HCT116 (cell line): ENCODE measurements at regions of chr11 and their contacts with region 1.

Region 1: DNA sequence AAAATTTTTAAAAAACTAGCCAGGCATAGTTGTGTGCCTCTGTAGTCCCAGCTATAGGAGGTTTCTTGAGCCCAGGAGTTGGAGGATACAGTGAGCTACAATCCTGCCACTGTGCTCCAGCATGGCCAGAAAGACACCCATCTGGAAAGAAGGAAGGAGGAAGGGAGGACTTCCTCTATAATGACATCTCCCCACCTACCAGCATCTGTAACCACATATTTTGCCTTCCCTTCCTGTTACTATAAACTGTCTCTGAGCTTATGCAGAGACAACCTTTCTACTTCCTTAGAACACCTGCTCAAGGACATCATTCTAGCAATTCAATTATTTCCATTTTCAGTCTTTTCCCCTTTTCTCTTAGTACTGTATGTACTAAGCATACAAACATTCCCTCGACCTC is 2.2 kb upstream of the NUP160 start:
- DNase-seq: no peak
- ATAC-seq: no peak
- H3K4me3 ChIP-seq: no peak overlapping the region
- H3K27ac ChIP-seq: no peak overlapping the region
- H3K4me1 ChIP-seq: peaks cover 8 to 24% of the 10 kb centered on the region in 2 experiments; a peak in 3 of 4 replicates
- H3K27me3 ChIP-seq: no peaks in the 10 kb centered on the region
- CTCF ChIP-seq: no peak
- POLR2A ChIP-seq: no peak
- RAD21 ChIP-seq: no peak

Region 2: DNA sequence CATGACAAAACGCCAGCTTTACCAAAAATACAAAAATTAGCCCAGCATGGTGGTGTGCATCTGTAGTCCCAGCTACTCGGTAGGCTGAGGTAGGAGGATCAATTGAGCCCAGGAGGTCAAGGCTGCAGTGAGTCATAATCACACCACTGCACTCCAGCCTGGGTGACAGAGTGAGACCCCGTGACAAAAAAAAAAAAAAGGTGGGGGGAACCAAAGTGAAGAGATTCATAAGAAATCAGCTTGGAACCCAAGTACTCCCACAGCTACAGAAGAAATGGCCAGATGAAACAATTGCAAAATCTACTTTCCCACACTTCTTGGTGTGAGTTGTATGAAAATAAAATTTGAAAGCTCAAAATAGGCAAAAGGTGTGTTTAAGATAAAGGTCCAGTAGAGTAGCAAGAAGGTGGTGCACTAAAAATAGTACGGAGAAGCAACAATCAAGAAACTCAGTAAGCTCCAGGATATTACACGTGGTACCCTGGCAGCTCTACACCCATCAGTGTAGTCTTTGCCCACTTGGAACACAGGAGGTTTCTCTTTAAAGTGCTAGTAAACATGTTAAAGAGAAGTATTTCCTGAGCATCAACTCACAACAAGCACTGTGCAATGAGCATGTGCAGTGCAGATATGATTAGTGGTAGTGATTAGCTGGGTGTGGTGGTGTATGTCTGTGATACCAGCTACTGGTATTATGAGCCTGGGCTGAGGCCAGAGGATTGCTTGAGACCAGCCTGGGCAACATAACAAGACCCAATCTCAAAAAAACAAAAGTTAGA is 1238.6 kb before region 1 on chr11:
- CTCF ChIA-PET with region 1: no interaction called
- POLR2A ChIA-PET with region 1: no interaction called
- RAD21 ChIA-PET with region 1: no interaction called
- intact Hi-C with region 1: no loop called
- DNase-seq: no peak
- ATAC-seq: no peak
- H3K4me3 ChIP-seq: no peak overlapping the region
- H3K27ac ChIP-seq: no peak overlapping the region
- H3K4me1 ChIP-seq: peaks cover 7 to 13% of the 10 kb centered on the region in 2 experiments
- H3K27me3 ChIP-seq: no peaks in the 10 kb centered on the region
- CTCF ChIP-seq: no peak
- POLR2A ChIP-seq: no peak
- RAD21 ChIP-seq: no peak

Region 3: DNA sequence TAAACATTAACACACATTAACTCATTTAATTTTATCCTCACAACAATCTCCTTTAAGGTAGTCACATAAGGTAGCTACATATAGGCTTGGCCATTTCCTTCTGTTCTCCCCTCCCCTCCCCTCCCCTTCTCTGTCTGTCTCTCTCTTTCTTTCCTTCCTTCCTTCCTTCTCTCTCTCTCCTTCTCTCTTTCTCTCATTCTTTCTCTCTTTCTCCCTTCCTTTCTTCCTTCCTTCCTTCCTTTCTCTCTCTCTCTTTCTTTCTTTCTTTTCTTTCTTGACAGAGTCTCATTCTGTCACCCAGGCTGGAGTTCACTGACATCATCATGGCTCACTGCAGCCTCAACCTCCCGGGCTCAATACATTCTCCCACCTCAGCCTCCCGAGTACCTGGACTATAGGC is 20.1 kb after region 1 on chr11:
- CTCF ChIA-PET with region 1: no interaction called
- POLR2A ChIA-PET with region 1: no interaction called
- RAD21 ChIA-PET with region 1: no interaction called
- intact Hi-C with region 1: no loop called
- DNase-seq: no peak
- ATAC-seq: no peak
- H3K4me3 ChIP-seq: no peak overlapping the region
- H3K27ac ChIP-seq: no peak overlapping the region
- H3K4me1 ChIP-seq: peaks cover 10 to 21% of the 10 kb centered on the region in 2 experiments; a peak in 3 of 4 replicates
- H3K27me3 ChIP-seq: no peaks in the 10 kb centered on the region
- CTCF ChIP-seq: no peak
- POLR2A ChIP-seq: no peak
- RAD21 ChIP-seq: no peak

Region 4: DNA sequence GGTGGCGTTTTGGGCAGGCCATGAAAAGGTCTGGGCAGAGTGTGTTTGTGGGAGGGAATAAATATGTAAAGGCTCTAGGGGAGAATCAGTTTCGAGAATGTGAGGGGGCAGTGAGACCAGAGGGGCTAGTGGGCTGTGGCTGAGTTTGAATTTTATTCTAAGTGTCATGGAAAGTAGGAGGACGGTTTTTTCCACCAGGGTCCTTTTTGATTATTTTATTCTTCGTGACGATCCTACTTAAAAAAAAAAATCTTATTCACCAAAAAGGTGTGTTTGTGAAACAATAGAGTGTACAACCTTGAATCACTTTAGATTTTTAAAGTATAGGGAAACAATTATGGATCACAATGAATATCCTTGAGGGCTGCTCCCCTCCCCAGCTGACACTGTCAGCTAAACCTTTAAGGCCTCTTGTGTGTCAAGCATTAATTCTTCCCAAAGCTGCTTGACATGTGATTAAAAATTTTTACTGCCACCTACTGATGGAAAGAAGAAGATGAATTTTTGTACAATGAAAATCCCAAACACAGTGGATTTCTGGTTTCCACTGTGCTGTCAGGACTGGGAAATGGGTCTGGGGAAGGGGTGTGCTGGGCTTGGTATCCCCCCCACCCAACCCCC is 258.8 kb after region 1 on chr11:
- CTCF ChIA-PET with region 1: interaction called, 3 read pairs
- POLR2A ChIA-PET with region 1: no interaction called
- RAD21 ChIA-PET with region 1: no interaction called
- intact Hi-C with region 1: loop called (anchors 5 kb)
- DNase-seq: peak; percentile 37
- ATAC-seq: peak; percentile 74
- H3K4me3 ChIP-seq: no peak overlapping the region
- H3K27ac ChIP-seq: 0 out of 2 replicates have a peak overlapping the region, but pooled peaks have one; percentile 14
- H3K4me1 ChIP-seq: peaks cover 17 to 26% of the 10 kb centered on the region in 2 experiments; a peak in 3 of 4 replicates
- H3K27me3 ChIP-seq: no peaks in the 10 kb centered on the region
- CTCF ChIP-seq: peak; percentile 26 to 63 (median 48); a peak in 4 of 6 replicates
- POLR2A ChIP-seq: no peak
- RAD21 ChIP-seq: peak; percentile 73